Sigmoid colon (tissue), 7 donors: ENCODE measurements at regions of chr14 and their contacts with region 1.

Region 1: GRCh38 chr14:58297762-58298476 is 436 bp upstream of the ARID4A start:
- DNase-seq: peak; percentile 99
- H3K4me3 ChIP-seq: peak overlapping the region; percentile 81 to 99 (median 88)
- H3K27ac ChIP-seq: peak overlapping the region; percentile 93 to 98 (median 95)
- H3K4me1 ChIP-seq: peaks cover 0 to 55% (median 28%) of the 10 kb centered on the region in 4 donors
- H3K27me3 ChIP-seq: no peaks in the 10 kb centered on the region
- CTCF ChIP-seq: no peak
- EP300 ChIP-seq: no peak
- POLR2A ChIP-seq: peak; percentile 62 to 74

Region 2: DNA sequence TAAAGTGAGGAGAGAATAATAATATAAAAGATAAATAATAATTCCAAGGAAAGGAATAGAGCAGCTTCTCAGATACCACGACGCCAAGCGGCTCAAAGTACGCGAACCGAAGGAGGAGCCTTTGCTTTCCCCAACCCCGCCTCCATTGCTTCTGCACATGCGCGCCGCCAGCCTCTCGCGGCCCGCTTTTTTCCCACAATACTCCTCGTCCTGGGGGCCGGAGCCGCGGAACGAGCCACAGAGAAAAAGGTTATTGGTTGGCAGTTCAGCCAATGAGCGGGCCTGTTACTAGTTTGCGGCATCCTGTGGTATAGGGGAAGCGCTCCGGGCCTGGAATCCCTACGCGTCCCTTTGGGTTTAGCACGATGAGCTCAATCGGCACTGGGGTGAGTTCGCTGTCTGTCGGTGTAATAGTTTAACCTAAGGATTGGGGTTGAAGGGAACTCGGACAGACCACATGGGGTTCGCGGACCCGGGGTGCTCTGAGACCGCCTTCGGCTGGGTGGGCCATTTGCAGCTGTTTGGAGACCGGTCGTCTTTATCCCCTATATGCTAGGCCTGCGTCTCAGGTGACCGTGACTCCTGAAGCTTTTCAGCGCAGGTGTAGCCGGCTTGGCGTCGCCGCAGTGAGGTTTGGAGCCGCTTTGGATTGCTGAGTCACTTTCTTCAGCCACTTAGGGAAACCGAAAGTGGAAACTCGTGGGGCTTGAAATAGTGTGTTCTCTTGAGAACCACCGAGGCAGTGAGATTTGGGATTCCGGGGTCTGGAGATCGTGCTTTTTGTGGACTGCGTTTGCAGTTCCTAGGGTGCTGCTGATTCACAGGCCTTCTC is 53.1 kb before region 1 on chr14 and contains the start of gene PSMA3:
- intact Hi-C with region 1: loop called (anchors 2 kb)
- DNase-seq: peak; percentile 99
- H3K4me3 ChIP-seq: peak within 1 kb of the TSS; percentile 59 to 89 (median 76)
- H3K27ac ChIP-seq: peak within 1 kb of the TSS; percentile 87 to 98 (median 93)
- H3K4me1 ChIP-seq: peaks cover 0 to 34% (median 25%) of the 10 kb centered on the region in 4 donors
- H3K27me3 ChIP-seq: no peaks in the 10 kb centered on the region
- CTCF ChIP-seq: no peak
- EP300 ChIP-seq: peak in 1 of 4 donors; percentile 49
- POLR2A ChIP-seq: peak; percentile 78
- total RNA-seq, gene PSMA3: 69.5 to 112 (median 107) TPM

Region 3: DNA sequence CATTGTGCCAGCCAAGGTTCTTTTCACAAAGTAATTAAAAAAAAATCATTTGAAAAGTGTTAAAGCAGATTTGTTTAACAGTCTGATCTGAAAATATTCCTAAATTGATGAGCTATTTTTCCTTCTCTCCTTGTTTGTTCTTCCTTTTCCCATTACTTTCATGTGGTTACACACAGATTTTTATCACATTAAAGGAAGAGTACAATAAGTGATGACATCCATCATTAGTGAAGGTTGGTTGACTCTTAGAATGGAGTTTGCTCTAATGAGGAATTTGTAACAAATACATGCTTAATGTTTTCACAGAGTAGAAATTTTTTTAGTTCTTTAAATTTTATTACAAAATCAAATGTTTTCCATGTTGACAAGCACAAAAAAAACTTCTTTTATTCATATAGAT is 78.9 kb after region 1 on chr14:
- intact Hi-C with region 1: no loop called
- DNase-seq: no peak
- H3K4me3 ChIP-seq: no peak overlapping the region
- H3K27ac ChIP-seq: no peak overlapping the region
- H3K4me1 ChIP-seq: no peaks in the 10 kb centered on the region
- H3K27me3 ChIP-seq: no peaks in the 10 kb centered on the region
- CTCF ChIP-seq: no peak
- EP300 ChIP-seq: no peak
- POLR2A ChIP-seq: no peak

Region 4: DNA sequence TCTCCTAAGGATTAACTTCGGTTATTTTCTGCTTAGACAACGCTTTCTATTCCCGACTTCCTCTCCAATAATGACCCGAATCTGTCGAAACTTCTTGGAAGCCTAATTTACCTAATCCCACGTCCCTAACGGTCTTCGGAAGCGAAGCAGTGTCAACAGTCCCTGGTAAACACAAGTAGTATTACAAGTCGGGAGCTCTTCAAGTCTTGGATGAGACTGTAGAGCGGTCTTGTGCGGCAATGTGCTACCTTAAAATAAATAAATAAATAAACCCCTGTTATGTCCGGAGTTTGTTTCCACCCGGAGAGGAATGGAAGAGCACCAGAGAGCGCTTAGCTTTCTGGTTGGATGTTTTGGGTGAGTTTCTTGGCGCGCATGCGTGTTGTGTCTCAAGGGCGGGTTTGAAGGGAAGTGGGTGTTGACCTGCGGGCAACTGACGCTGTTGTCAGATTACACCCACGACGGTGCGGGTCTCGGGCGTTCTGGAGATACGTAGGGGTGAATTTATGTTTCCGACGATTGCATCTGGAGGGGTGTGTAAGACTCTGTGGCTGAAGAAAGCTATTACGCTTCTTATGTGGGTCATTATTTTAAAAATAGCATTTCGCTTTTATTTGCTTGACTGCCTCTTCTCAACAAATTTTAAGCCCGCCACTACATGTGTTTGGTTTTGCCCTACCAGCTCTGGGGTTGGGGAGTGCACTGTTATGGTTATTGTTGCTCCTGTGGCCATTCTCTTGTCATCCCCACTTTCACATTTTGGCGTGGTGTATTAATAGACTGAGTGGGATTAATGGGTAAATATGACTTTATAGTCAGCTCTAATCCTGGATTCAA is 129.6 kb after region 1 on chr14 and contains the starts of genes KIAA0586 and TIMM9:
- intact Hi-C with region 1: loop called (anchors 2 kb)
- DNase-seq: peak; percentile 99
- H3K4me3 ChIP-seq: peak within 1 kb of the TSS; percentile 78 to 88 (median 84)
- H3K27ac ChIP-seq: peak within 1 kb of the TSS; percentile 87 to 96 (median 89)
- H3K4me1 ChIP-seq: peaks cover 0 to 34% (median 26%) of the 10 kb centered on the region in 4 donors
- H3K27me3 ChIP-seq: no peaks in the 10 kb centered on the region
- CTCF ChIP-seq: peak in 1 of 4 experiments; percentile 5
- EP300 ChIP-seq: peak in 1 of 4 donors; percentile 40
- POLR2A ChIP-seq: peak; percentile 55 to 69
- total RNA-seq, gene KIAA0586: 12.8 to 20.2 (median 16.0) TPM
- total RNA-seq, gene TIMM9: 70.3 to 130 (median 83.6) TPM